Esophagus squamous epithelium (tissue), 5 donors: ENCODE measurements at regions of chr17 and their contacts with region 1.

Region 1: GRCh38 chr17:38498186-38498752 is 70.0 kb downstream of the ARHGAP23 start:
- DNase-seq: no peak
- H3K4me3 ChIP-seq: no peak overlapping the region
- H3K27ac ChIP-seq: no peak overlapping the region
- H3K4me1 ChIP-seq: no peaks in the 10 kb centered on the region
- H3K27me3 ChIP-seq: no peaks in the 10 kb centered on the region
- CTCF ChIP-seq: no peak
- POLR2A ChIP-seq: no peak

Region 2: DNA sequence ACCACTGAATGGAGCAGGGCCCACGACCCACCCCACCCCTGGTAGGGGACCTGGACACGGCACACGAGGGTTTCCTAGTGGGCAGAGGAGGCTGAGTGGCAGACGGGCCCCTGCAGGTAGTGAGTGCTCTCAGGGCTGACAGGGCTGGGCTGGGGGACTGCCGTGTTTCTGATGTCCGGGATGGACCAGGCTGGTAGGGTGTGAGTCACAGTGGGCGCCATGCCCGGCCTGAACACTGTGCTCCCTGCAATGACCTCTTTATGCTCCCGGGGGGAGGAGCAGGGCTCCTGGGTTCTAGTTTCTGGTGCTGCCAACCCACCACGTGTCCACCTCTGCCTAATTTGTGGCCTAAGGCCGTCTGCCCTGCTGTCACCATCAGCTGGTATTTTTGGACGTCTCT is 43.8 kb before region 1 on chr17:
- intact Hi-C with region 1: no loop called
- DNase-seq: peak; percentile 29
- H3K4me3 ChIP-seq: peak overlapping the region; percentile 59 to 73 (median 61)
- H3K27ac ChIP-seq: peak overlapping the region; percentile 87 to 94 (median 92)
- H3K4me1 ChIP-seq: peaks cover 63 to 95% (median 66%) of the 10 kb centered on the region in 3 donors
- H3K27me3 ChIP-seq: peaks cover 0 to 3% (median 0%) of the 10 kb centered on the region in 4 donors
- CTCF ChIP-seq: no peak
- POLR2A ChIP-seq: peak in 2 of 4 donors; percentile 40 to 48

Region 3: DNA sequence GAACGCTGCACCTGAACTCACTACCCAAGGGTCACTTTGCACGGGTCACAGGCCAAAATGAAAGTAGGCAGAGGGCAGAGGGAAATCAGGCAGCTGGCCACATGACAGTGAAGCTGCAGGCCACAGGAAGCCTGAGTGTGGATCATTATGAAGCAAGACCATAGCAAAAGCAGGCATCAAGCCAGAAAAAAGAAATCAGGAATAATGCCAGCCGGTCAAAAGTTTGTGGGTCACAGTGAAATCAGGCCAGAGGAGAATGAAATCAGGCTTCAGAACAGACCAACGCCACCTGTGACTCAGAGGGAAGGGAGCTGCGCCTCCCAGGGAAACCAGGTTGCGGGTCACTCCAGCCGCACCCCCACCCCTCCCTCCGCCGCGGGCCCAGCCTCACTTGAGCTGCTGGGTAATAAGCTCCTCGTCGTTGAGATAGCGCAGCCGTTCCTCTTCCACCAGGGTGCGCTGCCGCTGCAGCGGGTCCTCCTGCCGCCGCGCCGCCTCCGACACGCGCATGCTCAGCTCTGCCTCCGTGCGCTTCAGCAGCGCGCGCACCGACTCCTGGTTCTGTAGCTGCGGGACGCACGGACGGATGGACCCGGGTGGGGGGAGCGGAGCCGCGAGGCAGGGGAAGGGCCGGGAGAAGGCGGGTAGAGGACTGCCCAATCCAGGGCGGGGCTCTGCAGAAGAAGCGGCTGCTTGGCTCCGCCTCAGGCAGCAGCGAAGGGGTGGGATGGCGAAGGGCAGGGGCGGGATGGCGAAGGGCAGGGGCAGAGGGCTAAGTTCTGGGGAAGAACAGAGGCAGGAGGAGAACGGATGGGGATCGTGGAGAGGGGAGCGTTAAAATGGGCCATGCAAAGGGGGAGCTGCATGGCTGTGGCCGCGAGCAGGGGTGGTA is 59.8 kb after region 1 on chr17:
- intact Hi-C with region 1: no loop called
- DNase-seq: peak; percentile 25
- H3K4me3 ChIP-seq: peak overlapping the region; percentile 29 to 70 (median 46)
- H3K27ac ChIP-seq: peak overlapping the region; percentile 63 to 87 (median 74)
- H3K4me1 ChIP-seq: peaks cover 26 to 79% (median 41%) of the 10 kb centered on the region in 3 donors
- H3K27me3 ChIP-seq: peaks cover 25 to 71% (median 28%) of the 10 kb centered on the region in 4 donors
- CTCF ChIP-seq: peak; percentile 91 to 98 (median 96)
- POLR2A ChIP-seq: peak in 2 of 4 donors; percentile 13 to 66

Region 4: GRCh38 chr17:38584350-38584925 is 86.2 kb after region 1 on chr17:
- intact Hi-C with region 1: loop called (anchors 10 kb)
- DNase-seq: no peak
- H3K4me3 ChIP-seq: no peak overlapping the region
- H3K27ac ChIP-seq: no peak overlapping the region
- H3K4me1 ChIP-seq: peaks cover 5 to 17% (median 6%) of the 10 kb centered on the region in 3 donors
- H3K27me3 ChIP-seq: peaks cover 0 to 90% (median 2%) of the 10 kb centered on the region in 4 donors
- CTCF ChIP-seq: peak; percentile 81 to 96 (median 90)
- POLR2A ChIP-seq: no peak

Region 5: DNA sequence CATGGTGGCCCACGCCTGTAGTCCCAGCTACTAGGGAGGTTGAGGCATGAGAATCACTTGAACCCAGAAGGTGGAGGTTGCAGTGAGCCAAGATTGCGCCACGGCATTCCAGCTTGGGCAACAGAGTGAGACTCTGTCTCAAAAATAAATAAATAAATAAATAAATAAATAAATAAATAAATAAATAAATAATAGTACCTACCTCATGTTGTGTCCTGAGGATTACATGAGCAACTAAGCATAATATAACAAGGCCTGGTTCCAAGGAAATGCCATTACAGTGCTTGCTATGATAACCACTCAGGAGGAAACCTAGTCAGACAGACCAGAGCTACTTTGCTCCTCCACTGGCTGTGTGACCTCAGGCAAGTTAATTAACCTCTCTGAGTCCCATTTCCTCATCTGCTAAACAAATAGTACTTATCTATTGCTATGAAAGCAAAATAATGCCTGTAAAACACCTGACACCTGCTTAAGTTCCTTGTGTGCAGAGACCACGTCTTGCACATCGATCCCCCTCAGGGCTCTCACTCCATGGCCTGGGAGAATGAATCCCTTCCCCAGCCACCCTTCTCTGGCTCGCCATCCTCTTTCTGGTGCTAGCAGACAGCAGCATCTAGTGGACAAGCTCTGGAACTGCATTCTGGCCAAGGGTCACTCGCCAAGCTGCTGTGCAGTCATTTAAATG is 169.0 kb after region 1 on chr17:
- intact Hi-C with region 1: loop called (anchors 10 kb)
- DNase-seq: no peak
- H3K4me3 ChIP-seq: no peak overlapping the region
- H3K27ac ChIP-seq: no peak overlapping the region
- H3K4me1 ChIP-seq: peaks cover 0 to 8% (median 0%) of the 10 kb centered on the region in 3 donors
- H3K27me3 ChIP-seq: peaks cover 0 to 57% (median 3%) of the 10 kb centered on the region in 4 donors
- CTCF ChIP-seq: peak; percentile 94 to 99 (median 96)
- POLR2A ChIP-seq: no peak